Posterior vena cava (tissue), 2 donors: ENCODE measurements at regions of chr12 and their contacts with region 1.

Region 1: GRCh38 chr12:103556890-103557627 is 30.0 kb upstream of the STAB2 start:
- DNase-seq: no peak

Region 2: DNA sequence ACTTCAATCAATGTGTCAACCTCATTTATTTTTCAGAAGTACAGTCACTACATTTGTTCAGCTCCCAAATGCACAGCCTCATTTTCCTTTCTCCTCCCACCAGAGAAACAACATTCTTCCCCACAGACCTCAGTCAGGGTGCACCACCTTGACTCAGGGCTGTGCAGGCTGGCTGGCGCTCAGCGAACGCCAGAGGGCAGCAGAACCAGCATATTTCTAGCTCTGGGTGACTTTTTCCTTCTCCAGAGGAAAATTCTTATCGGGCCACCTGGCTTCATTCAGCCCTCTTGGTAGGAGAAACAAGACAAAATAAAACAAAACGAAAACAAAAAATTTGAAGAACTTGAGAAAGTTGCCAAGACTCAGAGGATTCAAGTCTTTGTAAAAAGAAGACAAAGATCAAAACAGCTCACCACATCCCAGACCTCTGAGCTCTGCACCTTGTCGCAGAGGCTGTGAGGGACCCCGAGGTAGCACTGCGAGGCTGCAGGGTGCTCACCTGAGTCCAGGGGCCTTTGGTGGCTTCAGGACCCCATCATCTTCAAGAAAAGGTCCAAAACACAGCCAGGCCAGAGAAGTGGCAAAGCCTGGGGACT is 673.8 kb before region 1 on chr12:
- intact Hi-C with region 1: loop called in 1 of 2 experiments (anchors 10 kb)
- DNase-seq: no peak

Region 3: DNA sequence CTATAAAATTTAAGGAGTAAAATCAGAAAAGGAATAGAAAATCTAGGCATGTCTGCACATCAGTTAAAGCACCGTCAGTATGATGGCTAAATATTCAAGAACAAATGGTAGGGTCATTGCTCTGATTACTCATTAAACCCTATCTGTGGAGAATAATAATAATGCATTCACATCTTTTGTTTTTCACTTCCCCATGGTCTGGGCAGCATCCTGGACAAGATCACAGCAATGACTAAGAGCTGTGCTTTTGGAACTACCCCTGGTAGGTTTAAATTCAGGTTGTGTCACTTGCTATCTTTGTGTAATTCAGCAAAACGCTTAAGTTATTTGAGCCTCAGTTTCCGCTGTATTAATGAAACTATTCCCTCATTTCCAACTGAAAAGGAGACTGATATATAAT is 94.4 kb before region 1 on chr12:
- intact Hi-C with region 1: no loop called
- DNase-seq: no peak